PC-3 (cell line): ENCODE measurements at regions of chr3 and their contacts with region 1.

Region 1: DNA sequence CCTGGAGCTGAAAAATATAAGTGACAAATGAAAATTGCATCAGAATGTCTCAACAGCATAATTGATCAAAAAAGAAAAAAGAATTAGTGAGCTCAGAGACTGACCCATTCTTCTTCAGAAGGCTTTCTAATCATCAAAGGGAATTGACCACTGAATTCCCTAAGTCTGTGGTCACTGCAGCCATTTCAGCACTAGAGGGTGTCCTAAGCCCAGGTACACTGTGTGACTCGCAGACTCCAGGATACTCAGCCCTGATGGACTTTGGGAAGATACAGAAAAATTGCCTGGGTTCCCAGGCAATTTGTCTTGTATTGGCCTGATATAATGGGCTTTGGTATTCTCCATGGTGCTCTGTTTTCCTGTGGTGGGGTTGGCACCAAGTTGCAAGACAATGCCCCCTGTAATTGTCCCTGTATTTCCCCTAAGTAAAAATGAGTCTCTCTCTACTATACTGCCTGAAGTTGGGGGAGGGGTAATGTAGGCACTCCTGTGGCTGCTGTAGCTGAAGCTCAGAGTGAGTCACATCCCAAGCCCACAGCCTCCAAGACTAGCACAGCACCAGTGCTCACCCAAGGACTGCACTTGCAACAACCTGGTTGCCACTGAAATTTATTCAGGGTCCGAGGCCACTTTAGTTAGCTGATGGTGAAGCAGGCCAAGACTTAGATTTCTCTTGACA is 256.0 kb upstream of the STAC start:
- DNase-seq: peak; percentile 89
- ATAC-seq: peak; percentile 96
- H3K4me3 ChIP-seq: no peak overlapping the region
- H3K27ac ChIP-seq: no peak overlapping the region
- H3K4me1 ChIP-seq: peaks cover 12% of the 10 kb centered on the region
- H3K27me3 ChIP-seq: no peaks in the 10 kb centered on the region
- CTCF ChIP-seq: peak; percentile 95

Region 2: GRCh38 chr3:35992041-35992440 is 132.2 kb before region 1 on chr3:
- CTCF ChIA-PET with region 1: no interaction called
- POLR2A ChIA-PET with region 1: no interaction called
- intact Hi-C with region 1: no loop called
- DNase-seq: no peak
- ATAC-seq: no peak
- H3K4me3 ChIP-seq: no peak overlapping the region
- H3K27ac ChIP-seq: no peak overlapping the region
- H3K4me1 ChIP-seq: no peaks in the 10 kb centered on the region
- H3K27me3 ChIP-seq: no peaks in the 10 kb centered on the region
- CTCF ChIP-seq: no peak

Region 3: DNA sequence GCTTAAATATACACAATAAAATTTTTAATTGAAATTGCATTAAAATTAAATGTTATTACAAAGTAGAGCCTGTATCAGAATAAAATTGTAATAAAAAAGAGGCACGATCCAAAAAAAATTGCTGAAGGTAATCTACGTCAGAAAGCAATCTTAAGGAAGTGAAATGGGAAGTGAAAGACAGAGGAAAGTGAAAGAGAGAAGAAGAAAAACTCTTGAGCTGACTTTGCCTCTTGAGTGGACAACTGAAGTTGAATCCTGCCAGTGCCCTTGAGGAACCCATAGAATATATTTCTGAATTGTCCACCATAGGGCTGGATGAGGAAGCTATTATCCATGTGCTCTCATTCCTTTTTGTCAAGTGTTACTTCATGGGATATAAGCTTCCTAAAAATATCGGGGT is 29.0 kb before region 1 on chr3:
- CTCF ChIA-PET with region 1: no interaction called
- POLR2A ChIA-PET with region 1: no interaction called
- intact Hi-C with region 1: no loop called
- DNase-seq: no peak
- ATAC-seq: no peak
- H3K4me3 ChIP-seq: no peak overlapping the region
- H3K27ac ChIP-seq: no peak overlapping the region
- H3K4me1 ChIP-seq: no peaks in the 10 kb centered on the region
- H3K27me3 ChIP-seq: peaks cover 20% of the 10 kb centered on the region
- CTCF ChIP-seq: no peak

Region 4: GRCh38 chr3:36142746-36143145 is 18.5 kb after region 1 on chr3:
- CTCF ChIA-PET with region 1: no interaction called
- POLR2A ChIA-PET with region 1: no interaction called
- intact Hi-C with region 1: loop called (anchors 1 kb)
- DNase-seq: peak; percentile 51
- ATAC-seq: peak; percentile 67
- H3K4me3 ChIP-seq: no peak overlapping the region
- H3K27ac ChIP-seq: no peak overlapping the region
- H3K4me1 ChIP-seq: peaks cover 20% of the 10 kb centered on the region
- H3K27me3 ChIP-seq: no peaks in the 10 kb centered on the region
- CTCF ChIP-seq: no peak

Region 5: DNA sequence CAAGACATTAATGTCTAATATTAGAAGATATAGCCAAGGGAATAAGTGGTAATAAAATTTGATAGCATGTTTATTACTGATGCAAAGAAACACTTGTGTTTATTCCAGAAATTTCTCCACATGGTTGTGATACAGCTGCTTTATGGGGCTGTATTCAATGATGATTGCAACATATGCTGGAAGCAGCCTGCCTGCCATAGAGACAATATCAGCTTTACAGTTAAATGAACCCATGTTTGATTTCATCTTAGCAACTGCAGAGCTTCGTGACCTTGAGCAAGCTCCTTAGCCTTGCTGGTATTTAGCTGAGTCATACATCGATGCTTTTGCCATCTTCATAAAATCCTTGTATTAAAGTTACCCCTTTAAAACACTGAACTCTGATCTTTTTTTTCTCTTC is 88.0 kb after region 1 on chr3:
- CTCF ChIA-PET with region 1: no interaction called
- POLR2A ChIA-PET with region 1: no interaction called
- intact Hi-C with region 1: loop called (anchors 5 kb)
- DNase-seq: peak; percentile 33
- ATAC-seq: peak; percentile 52
- H3K4me3 ChIP-seq: no peak overlapping the region
- H3K27ac ChIP-seq: no peak overlapping the region
- H3K4me1 ChIP-seq: peaks cover 11% of the 10 kb centered on the region
- H3K27me3 ChIP-seq: no peaks in the 10 kb centered on the region
- CTCF ChIP-seq: no peak

Region 6: GRCh38 chr3:36380221-36381031 is 256.2 kb after region 1 on chr3 and contains the start of gene STAC:
- CTCF ChIA-PET with region 1: no interaction called
- POLR2A ChIA-PET with region 1: no interaction called
- intact Hi-C with region 1: loop called (anchors 10 kb)
- DNase-seq: peak; percentile 71
- ATAC-seq: peak; percentile 94
- H3K4me3 ChIP-seq: peak within 1 kb of the TSS; percentile 74
- H3K27ac ChIP-seq: no peak within 1 kb of the TSS
- H3K4me1 ChIP-seq: peaks cover 5% of the 10 kb centered on the region; the same call in 1 of the 2 replicates
- H3K27me3 ChIP-seq: no peaks in the 10 kb centered on the region
- CTCF ChIP-seq: no peak
- total RNA-seq, gene STAC: 4.4 and 6.7 TPM in 2 replicates

Region 7: DNA sequence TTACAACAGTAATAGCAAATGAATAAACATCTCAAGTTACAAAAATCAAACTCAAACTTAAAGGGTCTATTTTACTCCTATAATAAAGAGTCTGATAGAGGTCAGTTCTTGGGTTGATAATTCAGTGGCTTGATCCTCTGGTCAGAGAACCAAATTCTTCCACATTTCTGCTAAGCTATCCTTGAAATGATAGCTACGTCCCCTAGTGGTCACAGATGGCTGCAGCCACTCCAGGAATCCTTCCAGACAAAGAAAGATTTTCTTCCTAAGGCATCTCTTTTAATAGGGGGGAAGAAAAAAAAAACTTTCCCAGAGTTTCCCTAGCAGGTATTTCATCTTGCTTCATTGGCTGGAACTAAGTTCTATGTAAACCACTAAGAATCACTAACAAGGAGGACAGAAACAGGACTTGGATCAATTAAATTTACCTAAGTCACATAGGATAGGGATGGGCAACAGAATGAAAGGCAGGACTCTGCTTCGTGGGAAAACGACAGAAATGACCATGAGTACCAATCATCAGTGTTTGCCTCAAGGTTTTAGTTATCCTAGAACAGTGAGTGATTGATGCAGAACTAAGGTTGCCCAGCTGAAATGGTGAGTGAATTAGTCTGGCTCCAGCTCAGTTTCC is 416.7 kb after region 1 on chr3:
- CTCF ChIA-PET with region 1: interaction called, 3 read pairs
- POLR2A ChIA-PET with region 1: no interaction called
- intact Hi-C with region 1: loop called (anchors 1 kb)
- DNase-seq: peak; percentile 71
- ATAC-seq: peak; percentile 78
- H3K4me3 ChIP-seq: no peak overlapping the region
- H3K27ac ChIP-seq: no peak overlapping the region
- H3K4me1 ChIP-seq: no peaks in the 10 kb centered on the region
- H3K27me3 ChIP-seq: no peaks in the 10 kb centered on the region
- CTCF ChIP-seq: peak; percentile 96

Region 8: GRCh38 chr3:36648241-36649034 is 524.2 kb after region 1 on chr3:
- CTCF ChIA-PET with region 1: no interaction called
- POLR2A ChIA-PET with region 1: no interaction called
- intact Hi-C with region 1: loop called (anchors 1 kb)
- DNase-seq: peak; percentile 94
- ATAC-seq: peak; percentile 91
- H3K4me3 ChIP-seq: peak overlapping the region; percentile 26; the same call in 1 of the 2 replicates
- H3K27ac ChIP-seq: peak overlapping the region; percentile 51
- H3K4me1 ChIP-seq: peaks cover 34% of the 10 kb centered on the region
- H3K27me3 ChIP-seq: no peaks in the 10 kb centered on the region
- CTCF ChIP-seq: no peak

Region 9: GRCh38 chr3:36868614-36869436 is 744.6 kb after region 1 on chr3:
- CTCF ChIA-PET with region 1: interaction called, 4 read pairs
- POLR2A ChIA-PET with region 1: no interaction called
- intact Hi-C with region 1: loop called (anchors 5 kb)
- DNase-seq: peak; percentile 73
- ATAC-seq: peak; percentile 79
- H3K4me3 ChIP-seq: no peak overlapping the region
- H3K27ac ChIP-seq: no peak overlapping the region
- H3K4me1 ChIP-seq: no peaks in the 10 kb centered on the region
- H3K27me3 ChIP-seq: no peaks in the 10 kb centered on the region
- CTCF ChIP-seq: peak; percentile 86